ENCODE measurements at regions of chr11 and their contacts with region 1.

Region 1: DNA sequence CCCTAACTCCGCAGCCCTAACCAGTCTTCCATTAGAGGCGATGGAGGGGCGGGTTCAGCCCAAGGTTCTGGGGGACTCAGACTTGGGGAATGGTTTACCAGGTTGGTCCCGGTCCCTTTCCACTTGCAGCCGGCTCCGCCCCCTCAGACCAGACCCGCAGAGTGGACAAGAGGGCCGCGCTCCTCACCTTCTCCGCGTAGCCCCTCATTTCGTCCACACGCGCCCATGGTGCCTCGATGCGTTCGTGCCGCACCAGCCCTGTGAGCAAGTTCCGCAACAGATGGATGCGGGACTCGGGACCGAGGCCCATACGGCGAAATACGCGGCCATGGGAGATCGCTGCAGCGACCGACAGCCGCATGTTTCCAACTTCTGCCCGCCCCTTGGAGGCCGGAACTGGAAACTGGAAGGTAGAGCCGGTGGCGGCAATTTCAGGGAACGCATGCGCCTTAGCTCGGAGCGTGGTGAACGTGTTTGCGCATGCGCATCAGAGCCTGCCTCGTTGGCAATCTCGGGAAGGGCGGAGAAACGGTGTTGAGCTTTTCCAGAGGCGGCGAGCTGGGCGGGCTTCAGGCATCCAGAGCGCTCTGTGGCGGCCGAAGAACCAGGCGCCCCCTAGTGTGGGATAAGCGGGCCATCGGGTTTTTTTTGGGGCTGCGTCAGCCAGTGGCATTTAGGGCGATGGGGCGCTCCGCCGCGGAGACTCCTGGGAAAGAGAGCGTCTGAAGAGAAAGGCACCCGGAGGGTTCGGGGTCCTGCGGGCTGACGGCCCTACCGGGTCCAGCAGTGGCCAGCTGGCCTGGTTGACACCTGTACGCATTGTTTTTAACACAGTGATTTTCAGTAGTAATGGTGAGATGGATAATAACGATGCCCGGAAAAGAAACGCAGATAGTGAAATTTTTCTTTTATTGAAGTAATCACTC is at the start of gene MRPL17:
- DNase-seq: peak; percentile 99
- ATAC-seq: peak; percentile 98
- H3K4me3 ChIP-seq: peak within 1 kb of the TSS; percentile 82 to 99
- H3K27ac ChIP-seq: peak within 1 kb of the TSS; percentile 99
- H3K4me1 ChIP-seq: peaks cover 16% of the 10 kb centered on the region
- H3K27me3 ChIP-seq: peaks cover 3% of the 10 kb centered on the region; the same call in 1 of the 2 replicates
- CTCF ChIP-seq: peak; percentile 100
- total RNA-seq, gene MRPL17: 115 TPM

Region 2: DNA sequence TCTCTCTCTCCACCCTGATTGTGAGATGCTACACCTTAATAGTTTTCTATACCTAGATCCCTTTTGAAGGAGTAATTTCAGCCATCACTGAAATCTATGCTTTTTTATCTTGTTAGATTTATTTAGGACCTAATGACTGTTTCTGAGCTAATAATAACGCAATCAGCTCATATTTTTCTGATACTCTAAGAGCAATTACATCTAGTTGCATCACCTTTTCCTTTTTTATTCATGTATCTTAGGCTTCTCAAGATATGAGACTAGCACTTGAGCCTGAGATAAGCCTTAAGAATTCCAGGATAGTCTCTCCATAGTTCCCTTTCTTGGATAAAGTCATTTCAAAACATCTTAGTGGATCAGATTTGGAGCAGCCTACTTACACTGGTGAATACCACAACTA is 337.8 kb before region 1 on chr11:
- CTCF ChIA-PET with region 1: no interaction called
- POLR2A ChIA-PET with region 1: interaction called, 11 read pairs
- in situ Hi-C with region 1: no loop called
- intact Hi-C with region 1: no loop called
- DNase-seq: no peak
- ATAC-seq: no peak
- H3K4me3 ChIP-seq: no peak overlapping the region
- H3K27ac ChIP-seq: no peak overlapping the region
- H3K4me1 ChIP-seq: no peaks in the 10 kb centered on the region
- H3K27me3 ChIP-seq: no peaks in the 10 kb centered on the region
- CTCF ChIP-seq: no peak

Region 3: GRCh38 chr11:6531267-6531752 is 151.9 kb before region 1 on chr11:
- CTCF ChIA-PET with region 1: interaction called, 34 read pairs
- POLR2A ChIA-PET with region 1: no interaction called
- in situ Hi-C with region 1: no loop called
- intact Hi-C with region 1: loop called (anchors 5 kb)
- DNase-seq: peak; percentile 80
- ATAC-seq: peak; percentile 84
- H3K4me3 ChIP-seq: no peak overlapping the region
- H3K27ac ChIP-seq: no peak overlapping the region
- H3K4me1 ChIP-seq: no peaks in the 10 kb centered on the region
- H3K27me3 ChIP-seq: no peaks in the 10 kb centered on the region
- CTCF ChIP-seq: peak; percentile 94

Region 4: DNA sequence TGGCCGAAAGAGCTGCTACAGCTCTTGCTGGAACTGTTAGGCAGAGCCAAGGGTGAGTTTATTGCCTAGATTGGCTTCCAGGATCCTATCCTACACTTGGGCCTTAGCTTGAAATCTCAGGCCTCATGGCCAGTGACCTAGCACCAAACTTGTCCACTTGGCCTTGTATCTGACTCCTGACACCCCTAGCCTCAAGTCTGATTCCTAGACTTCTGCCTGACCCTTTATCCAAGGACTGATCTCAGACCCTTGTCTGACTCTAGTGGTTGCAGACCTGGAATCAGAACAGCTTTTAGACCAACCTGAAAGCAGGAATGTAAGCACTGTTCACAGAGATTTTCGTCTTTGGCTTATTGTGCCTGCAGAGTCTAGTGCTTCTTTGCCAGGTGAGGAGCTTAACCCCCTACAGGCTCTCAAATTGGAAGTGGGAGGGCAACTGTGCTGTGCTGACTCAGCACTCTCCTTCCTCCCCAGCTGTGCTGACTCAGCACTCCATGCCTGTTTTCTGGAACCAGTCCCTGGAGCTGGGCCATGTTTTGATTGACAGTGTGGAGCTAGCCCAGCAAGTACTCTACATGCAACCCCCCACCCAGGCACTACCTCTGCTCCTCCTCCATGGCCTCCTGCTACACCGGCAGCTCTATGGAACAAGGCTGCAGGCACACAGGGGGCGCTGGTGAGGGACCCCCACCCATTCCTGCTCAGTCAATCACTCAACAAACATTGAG is 114.8 kb before region 1 on chr11:
- CTCF ChIA-PET with region 1: no interaction called
- POLR2A ChIA-PET with region 1: interaction called, 10 read pairs
- in situ Hi-C with region 1: no loop called
- intact Hi-C with region 1: no loop called
- DNase-seq: no peak
- ATAC-seq: 0 out of 2 replicates have a peak, but pooled peaks have one; percentile 25
- H3K4me3 ChIP-seq: no peak overlapping the region
- H3K27ac ChIP-seq: no peak overlapping the region
- H3K4me1 ChIP-seq: no peaks in the 10 kb centered on the region
- H3K27me3 ChIP-seq: no peaks in the 10 kb centered on the region
- CTCF ChIP-seq: no peak

Region 5: GRCh38 chr11:6612213-6613041 is 70.8 kb before region 1 on chr11 and contains the start of gene TAF10:
- CTCF ChIA-PET with region 1: interaction called, 4 read pairs
- POLR2A ChIA-PET with region 1: no interaction called
- in situ Hi-C with region 1: no loop called
- intact Hi-C with region 1: loop called (anchors 5 kb)
- DNase-seq: peak; percentile 80
- ATAC-seq: peak; percentile 93
- H3K4me3 ChIP-seq: peak within 1 kb of the TSS; percentile 57 to 94
- H3K27ac ChIP-seq: peak within 1 kb of the TSS; percentile 99
- H3K4me1 ChIP-seq: peaks cover 29% of the 10 kb centered on the region
- H3K27me3 ChIP-seq: no peaks in the 10 kb centered on the region
- CTCF ChIP-seq: peak; percentile 80; the same call in 1 of the 2 replicates
- total RNA-seq, gene TAF10: 387 TPM

Region 6: DNA sequence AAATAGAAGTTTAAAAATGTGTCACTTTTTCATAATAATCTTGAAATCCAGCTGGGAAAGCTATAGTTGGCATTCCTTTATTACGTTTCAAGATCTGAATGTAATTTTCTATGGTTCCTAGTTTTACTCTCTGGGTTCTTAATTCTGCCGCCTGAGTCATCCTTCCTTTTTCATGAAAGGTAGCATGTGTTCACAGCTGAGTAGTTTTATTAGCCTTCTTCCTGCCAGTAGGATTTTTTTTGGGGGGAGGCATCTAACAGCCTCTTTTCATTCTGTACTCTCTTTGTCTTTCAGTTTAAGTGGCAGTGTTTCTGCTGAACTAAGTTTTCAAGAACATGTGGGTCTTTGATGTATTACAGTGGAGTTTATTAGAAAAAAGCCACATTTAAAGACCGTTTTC is 52.1 kb after region 1 on chr11:
- CTCF ChIA-PET with region 1: no interaction called
- POLR2A ChIA-PET with region 1: no interaction called
- in situ Hi-C with region 1: no loop called
- intact Hi-C with region 1: no loop called
- DNase-seq: no peak
- ATAC-seq: no peak; the same call in 1 of the 2 replicates
- H3K4me3 ChIP-seq: no peak overlapping the region
- H3K27ac ChIP-seq: no peak overlapping the region
- H3K4me1 ChIP-seq: 0 out of 2 replicates have a peak, but pooled peaks cover 3% of the 10 kb centered on the region
- H3K27me3 ChIP-seq: peaks cover 6% of the 10 kb centered on the region; the same call in 1 of the 2 replicates
- CTCF ChIP-seq: no peak

Region 7: GRCh38 chr11:7046474-7047175 is 363.4 kb after region 1 on chr11:
- CTCF ChIA-PET with region 1: no interaction called
- POLR2A ChIA-PET with region 1: no interaction called
- in situ Hi-C with region 1: no loop called
- intact Hi-C with region 1: no loop called
- DNase-seq: no peak
- ATAC-seq: no peak
- H3K4me3 ChIP-seq: no peak overlapping the region
- H3K27ac ChIP-seq: no peak overlapping the region
- H3K4me1 ChIP-seq: no peaks in the 10 kb centered on the region
- H3K27me3 ChIP-seq: peaks cover 4% of the 10 kb centered on the region; the same call in 1 of the 2 replicates
- CTCF ChIP-seq: no peak

Measured in Panc1 (cell line).